ENCODE measurements at regions of chr16 and their contacts with region 1.

Region 1: DNA sequence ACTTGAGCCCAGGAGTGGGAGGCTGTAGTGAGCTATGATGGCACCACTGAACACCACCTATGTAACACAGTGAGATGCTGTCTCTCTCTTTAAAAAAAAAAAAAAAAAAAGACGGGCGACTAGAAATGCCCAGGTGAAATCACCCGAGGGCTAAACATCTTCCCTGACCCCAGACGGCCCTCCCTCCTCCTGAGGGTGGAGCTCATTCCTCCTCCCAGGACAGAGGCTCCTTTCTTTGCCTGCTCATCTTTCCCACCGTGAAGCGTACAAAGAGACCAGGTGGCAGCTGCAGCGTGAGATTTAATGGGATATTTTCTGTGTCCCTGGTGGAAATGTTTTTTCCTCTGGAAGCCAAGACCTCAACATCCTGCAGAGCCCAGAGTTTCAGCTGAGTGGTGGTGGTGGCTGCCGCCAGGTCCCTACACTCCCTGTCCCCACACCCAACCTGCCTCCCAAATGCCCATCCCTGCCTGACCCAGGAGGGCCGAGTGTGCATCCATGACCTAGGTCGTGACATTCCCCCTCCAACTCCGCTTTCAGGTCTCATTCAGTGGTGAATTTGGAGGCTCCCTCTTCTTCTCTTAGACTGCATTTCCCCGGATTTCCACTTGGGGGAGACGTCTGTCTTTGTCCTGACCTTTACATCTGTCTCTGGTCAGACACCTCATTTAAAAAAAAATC is 14.4 kb upstream of the GPRC5B start:
- DNase-seq: no peak
- ATAC-seq: peak in 1 of 2 donors; percentile 51
- H3K4me3 ChIP-seq: no peak overlapping the region
- H3K27ac ChIP-seq: no peak overlapping the region
- H3K4me1 ChIP-seq: no peaks in the 10 kb centered on the region
- H3K27me3 ChIP-seq: no peaks in the 10 kb centered on the region
- CTCF ChIP-seq: peak in 4 of 5 experiments; percentile 10 to 56 (median 48)
- POLR2A ChIP-seq: no peak

Region 2: GRCh38 chr16:19601083-19601976 is 297.7 kb before region 1 on chr16:
- in situ Hi-C with region 1: loop called in 1 of 4 experiments (anchors 10 kb)
- intact Hi-C with region 1: no loop called
- DNase-seq: no peak
- ATAC-seq: no peak
- H3K4me3 ChIP-seq: no peak overlapping the region
- H3K27ac ChIP-seq: no peak overlapping the region
- H3K4me1 ChIP-seq: peaks cover 4 to 7% of the 10 kb centered on the region in 2 donors
- H3K27me3 ChIP-seq: no peaks in the 10 kb centered on the region
- CTCF ChIP-seq: peak; percentile 44 to 66 (median 62)
- POLR2A ChIP-seq: no peak

Measured in gastrocnemius medialis (tissue), 4 donors.